ENCODE measurements at regions of chr15 and their contacts with region 1.

Region 1: GRCh38 chr15:70097337-70098169 is at the start of gene TLE3:
- DNase-seq: peak; percentile 98 to 100 (median 100)
- H3K4me3 ChIP-seq: peak within 1 kb of the TSS; percentile 65 to 92 (median 79)
- H3K27ac ChIP-seq: peak within 1 kb of the TSS; percentile 77 to 100 (median 96)
- H3K27me3 ChIP-seq: peaks cover 0 to 19% (median 0%) of the 10 kb centered on the region in 45 donors
- CTCF ChIP-seq: peak in 53 of 56 donors; percentile 19 to 66 (median 44)
- total RNA-seq, gene TLE3: 22.5 to 97.6 (median 43.5) TPM

Region 2: DNA sequence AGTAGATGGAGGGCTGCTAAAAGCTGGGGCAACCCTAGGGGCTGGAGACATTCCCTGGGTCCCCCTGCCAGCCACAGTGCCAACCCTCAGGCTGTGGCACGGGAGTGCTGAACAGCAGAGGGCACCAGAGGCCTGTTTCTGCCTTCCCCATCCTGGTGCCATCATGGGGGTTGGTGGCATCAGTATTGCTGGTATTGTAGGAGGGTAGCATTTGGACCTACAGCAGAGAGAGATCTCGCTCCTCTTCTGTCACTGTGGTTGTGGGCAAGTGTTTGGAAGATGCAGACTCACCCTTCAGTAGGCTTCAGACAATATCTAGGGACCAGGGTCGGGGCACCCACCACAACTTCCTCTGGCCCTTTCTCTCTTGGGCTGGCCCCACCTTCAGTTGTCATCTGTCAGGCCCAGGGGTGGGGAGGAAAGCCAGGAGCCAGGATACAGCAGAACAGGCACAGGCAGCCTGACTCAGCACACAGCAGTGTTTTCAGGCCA is 521.5 kb before region 1 on chr15:
- intact Hi-C with region 1: loop called in 1 of 2 experiments (anchors 10 kb)
- DNase-seq: peak; percentile 19 to 80 (median 60)
- H3K4me3 ChIP-seq: no peak overlapping the region
- H3K27ac ChIP-seq: no peak overlapping the region
- H3K27me3 ChIP-seq: peaks cover 0 to 9% (median 0%) of the 10 kb centered on the region in 45 donors
- CTCF ChIP-seq: peak; percentile 19 to 90 (median 76)

Region 3: DNA sequence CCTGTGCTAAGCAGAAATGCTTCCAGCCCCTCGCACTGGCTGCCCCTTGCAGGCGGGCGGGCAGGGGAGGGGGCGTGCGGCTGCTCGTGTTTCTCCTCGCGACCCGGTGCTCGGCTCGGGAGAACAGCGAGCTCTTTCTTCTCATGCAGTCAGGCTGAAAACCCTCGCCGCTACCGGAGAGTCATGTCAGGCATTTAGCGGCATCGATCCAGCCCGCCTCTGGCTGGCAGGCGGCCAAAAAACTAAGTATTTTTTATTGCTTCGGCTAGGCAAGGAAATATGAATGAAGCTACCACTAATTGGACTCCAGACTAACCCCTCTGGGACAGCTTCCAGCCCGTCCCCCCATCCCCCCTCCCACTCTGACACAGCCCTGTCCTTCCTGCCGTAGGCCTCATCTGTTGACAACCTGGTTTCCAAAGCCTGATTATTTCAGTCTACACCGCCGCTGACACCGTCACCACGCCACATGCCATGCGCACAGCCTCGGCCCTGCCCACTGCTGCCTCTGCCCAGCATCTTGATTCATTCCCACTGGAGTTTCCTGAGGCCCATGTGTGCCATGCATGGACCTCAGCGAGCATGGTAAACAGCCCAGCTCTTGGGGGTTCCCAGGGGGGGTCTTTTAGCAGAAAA is 35.1 kb before region 1 on chr15:
- intact Hi-C with region 1: loop called (anchors 2 to 5 kb)
- DNase-seq: peak; percentile 34 to 87 (median 69)
- H3K4me3 ChIP-seq: peak overlapping the region in 55 of 59 donors; percentile 6 to 70 (median 42)
- H3K27ac ChIP-seq: peak overlapping the region in 41 of 59 donors; percentile 0 to 77 (median 53)
- H3K27me3 ChIP-seq: no peaks in the 10 kb centered on the region
- CTCF ChIP-seq: no peak

Region 4: GRCh38 chr15:70355275-70355795 is 257.8 kb after region 1 on chr15:
- intact Hi-C with region 1: loop called in 1 of 2 experiments (anchors 10 kb)
- DNase-seq: no peak
- H3K4me3 ChIP-seq: no peak overlapping the region
- H3K27ac ChIP-seq: no peak overlapping the region
- H3K27me3 ChIP-seq: peaks cover 0 to 7% (median 0%) of the 10 kb centered on the region in 45 donors
- CTCF ChIP-seq: no peak

Region 5: GRCh38 chr15:70474471-70475396 is 377.2 kb after region 1 on chr15:
- intact Hi-C with region 1: loop called in 1 of 2 experiments (anchors 5 kb)
- DNase-seq: peak in 7 of 10 donors; percentile 52 to 72 (median 56)
- H3K4me3 ChIP-seq: peak overlapping the region in 58 of 59 donors; percentile 2 to 60 (median 37)
- H3K27ac ChIP-seq: peak overlapping the region in 32 of 59 donors; percentile 8 to 81 (median 52)
- H3K27me3 ChIP-seq: peaks cover 0 to 23% (median 0%) of the 10 kb centered on the region in 45 donors
- CTCF ChIP-seq: no peak

Measured in dorsolateral prefrontal cortex (tissue), 120 donors.